ENCODE measurements at regions of chr16 and their contacts with region 1.

Region 1: DNA sequence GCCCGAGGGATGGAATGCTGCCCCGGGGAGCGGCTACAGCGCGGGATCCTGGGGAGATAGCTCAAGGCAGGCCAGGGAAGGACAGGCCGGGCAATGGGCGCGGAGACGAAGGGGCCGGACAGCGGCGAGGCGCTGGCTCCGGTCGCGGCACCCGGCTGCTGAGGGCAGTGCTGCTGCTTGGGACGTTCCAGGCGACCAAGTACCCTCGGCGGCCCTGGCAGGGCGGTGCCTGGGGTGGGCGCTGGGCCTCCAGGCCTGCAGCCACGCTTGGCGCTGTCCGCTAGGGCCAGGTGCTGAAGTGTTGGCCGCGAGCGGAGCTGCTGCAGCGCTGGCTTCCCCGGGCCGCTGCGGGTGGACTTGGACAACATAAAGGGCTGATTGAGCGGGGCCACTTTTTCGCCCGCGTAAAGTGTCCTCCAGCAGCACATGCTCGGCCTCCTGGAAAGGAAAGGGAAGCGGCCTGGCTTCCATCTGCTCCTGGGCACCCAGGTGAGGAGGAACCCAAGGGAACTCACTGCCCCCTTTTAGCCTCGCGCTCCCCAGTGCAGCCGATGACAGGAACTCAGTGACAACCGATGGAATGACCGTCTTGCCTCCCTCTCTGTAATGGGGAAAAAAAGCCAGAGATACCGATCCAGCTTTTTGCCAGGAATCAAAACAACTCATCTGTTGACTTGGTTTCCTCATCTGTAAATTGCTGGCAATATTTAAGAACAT is 23.7 kb downstream of the CLEC3A start:
- DNase-seq: peak; percentile 82 to 92
- ATAC-seq: peak; percentile 93
- H3K4me3 ChIP-seq: no peak overlapping the region
- H3K27ac ChIP-seq: no peak overlapping the region
- H3K4me1 ChIP-seq: no peaks in the 10 kb centered on the region
- H3K27me3 ChIP-seq: no peaks in the 10 kb centered on the region

Region 2: GRCh38 chr16:78099372-78100161 is 53.5 kb after region 1 on chr16 and contains the start of gene WWOX:
- intact Hi-C with region 1: loop called in 1 of 2 experiments (anchors 5 kb)
- DNase-seq: peak; percentile 98 to 99
- ATAC-seq: peak; percentile 98
- H3K4me3 ChIP-seq: peak within 1 kb of the TSS; percentile 58 to 79
- H3K27ac ChIP-seq: peak within 1 kb of the TSS in 1 of 2 donors; percentile 77
- H3K4me1 ChIP-seq: no peaks in the 10 kb centered on the region
- H3K27me3 ChIP-seq: no peaks in the 10 kb centered on the region
- total RNA-seq, gene WWOX: 17.3 to 30.9 TPM